Heart left ventricle (tissue), 16 donors: ENCODE measurements at regions of chr17 and their contacts with region 1.

Region 1: GRCh38 chr17:19648475-19649406 is at the start of gene ALDH3A2:
- DNase-seq: peak; percentile 98 to 99 (median 99)
- ATAC-seq: peak; percentile 99
- H3K4me3 ChIP-seq: peak within 1 kb of the TSS; percentile 59 to 97 (median 82)
- H3K27ac ChIP-seq: peak within 1 kb of the TSS; percentile 74 to 99 (median 95)
- H3K4me1 ChIP-seq: peaks cover 0 to 60% (median 46%) of the 10 kb centered on the region in 12 donors
- H3K27me3 ChIP-seq: no peaks in the 10 kb centered on the region
- CTCF ChIP-seq: peak in 4 of 12 donors; percentile 18 to 41 (median 25)
- POLR2A ChIP-seq: peak; percentile 58 to 98
- total RNA-seq, gene ALDH3A2: 57.0 to 129 (median 83.2) TPM

Region 2: DNA sequence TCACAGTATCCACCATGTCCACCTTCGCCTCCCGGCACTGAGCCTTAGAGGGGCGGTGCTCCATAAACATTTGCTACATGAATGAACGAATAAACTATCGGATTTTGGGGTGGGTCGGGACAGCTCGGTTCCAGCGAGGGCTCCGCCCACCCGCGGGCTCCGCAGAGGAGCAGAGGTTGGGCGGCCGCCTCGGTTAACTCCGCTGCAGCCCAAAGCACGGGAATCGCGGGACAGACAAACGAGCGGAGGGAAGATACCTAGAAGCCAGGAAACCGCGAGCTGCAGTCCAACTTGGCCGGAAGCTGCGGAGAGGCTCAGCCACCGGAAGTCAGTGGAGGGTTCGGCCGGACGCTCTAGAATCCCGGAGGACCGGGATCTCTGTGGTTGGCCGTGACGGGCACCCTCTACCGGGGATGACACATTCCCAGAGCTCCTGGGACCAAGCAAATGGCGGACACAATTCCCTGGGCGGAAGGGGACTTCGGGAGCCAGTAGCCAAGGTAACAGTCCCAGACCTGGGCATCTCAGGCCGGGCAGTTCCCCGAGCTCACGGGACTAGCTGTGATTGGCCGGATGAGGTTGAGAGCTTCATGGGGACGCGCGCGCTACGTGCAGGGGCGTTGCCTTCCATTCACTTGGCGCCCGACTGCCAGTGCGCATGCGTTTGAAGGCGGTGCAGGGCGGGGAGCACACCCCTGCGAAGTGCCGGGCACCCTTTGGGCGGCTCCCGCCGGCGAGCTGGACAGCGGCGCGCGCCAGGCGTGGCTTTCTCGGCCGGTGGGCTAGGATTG is 270.9 kb before region 1 on chr17:
- intact Hi-C with region 1: loop called in 1 of 10 experiments (anchors 10 kb)
- DNase-seq: peak in 4 of 5 donors; percentile 99
- ATAC-seq: peak; percentile 92 to 98 (median 96)
- H3K4me3 ChIP-seq: peak overlapping the region; percentile 39 to 97 (median 80)
- H3K27ac ChIP-seq: peak overlapping the region; percentile 71 to 99 (median 94)
- H3K4me1 ChIP-seq: peaks cover 0 to 30% (median 17%) of the 10 kb centered on the region in 12 donors
- H3K27me3 ChIP-seq: no peaks in the 10 kb centered on the region
- CTCF ChIP-seq: peak in 4 of 12 donors; percentile 5 to 33 (median 20)
- POLR2A ChIP-seq: peak in 1 of 2 donors; percentile 44

Region 3: GRCh38 chr17:19513897-19514488 is 134.7 kb before region 1 on chr17:
- intact Hi-C with region 1: loop called in 9 of 10 experiments (anchors 2 to 10 kb)
- DNase-seq: peak; percentile 59 to 73 (median 70)
- ATAC-seq: peak; percentile 56 to 86 (median 74)
- H3K4me3 ChIP-seq: peak overlapping the region in 6 of 12 donors; percentile 4 to 34 (median 22)
- H3K27ac ChIP-seq: peak overlapping the region in 11 of 12 donors; percentile 43 to 79 (median 69)
- H3K4me1 ChIP-seq: peaks cover 0 to 14% (median 8%) of the 10 kb centered on the region in 12 donors
- H3K27me3 ChIP-seq: no peaks in the 10 kb centered on the region
- CTCF ChIP-seq: peak; percentile 82 to 97 (median 90)
- POLR2A ChIP-seq: no peak

Region 4: DNA sequence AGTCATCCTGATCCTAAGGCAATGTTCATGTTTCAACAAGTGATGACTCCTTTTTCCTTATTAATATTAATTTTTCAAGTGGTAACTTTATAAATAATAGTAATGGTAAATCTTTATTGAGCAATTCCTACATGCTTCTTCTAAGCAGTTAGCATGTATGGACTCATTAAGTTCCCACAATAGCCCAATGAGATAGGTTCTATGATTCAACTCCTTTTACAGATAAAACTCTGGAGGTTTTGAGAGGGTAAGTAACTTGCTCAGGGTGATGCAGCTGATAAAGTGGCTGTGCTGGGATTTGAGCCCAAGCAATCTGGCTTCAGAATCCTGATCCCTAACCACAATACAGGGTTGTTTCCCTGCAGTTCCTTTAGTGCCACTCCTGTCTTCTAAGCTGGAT is 89.8 kb before region 1 on chr17:
- intact Hi-C with region 1: no loop called
- DNase-seq: no peak
- ATAC-seq: no peak
- H3K4me3 ChIP-seq: no peak overlapping the region
- H3K27ac ChIP-seq: no peak overlapping the region
- H3K4me1 ChIP-seq: peaks cover 0 to 10% (median 0%) of the 10 kb centered on the region in 12 donors
- H3K27me3 ChIP-seq: no peaks in the 10 kb centered on the region
- CTCF ChIP-seq: no peak
- POLR2A ChIP-seq: no peak

Region 5: DNA sequence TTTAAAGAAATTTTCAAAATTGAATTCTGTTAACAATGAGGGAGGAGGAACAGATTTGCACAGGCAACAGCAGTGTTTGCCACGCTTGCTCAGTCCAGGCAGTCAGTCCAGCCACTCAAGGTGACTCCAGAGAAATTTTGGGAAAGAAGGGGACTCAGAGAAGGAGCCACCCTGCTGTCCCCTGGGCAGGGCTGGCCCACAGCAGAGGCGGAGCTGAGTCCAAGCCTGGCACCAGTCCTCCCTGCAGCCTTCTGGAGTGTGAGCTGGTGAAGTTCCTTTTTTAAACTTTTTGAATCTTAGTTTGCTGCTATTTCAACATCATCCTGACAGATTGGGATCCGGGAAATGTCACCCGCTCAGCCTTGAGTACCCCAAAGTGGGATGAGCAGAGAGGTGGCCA is 82.1 kb after region 1 on chr17:
- intact Hi-C with region 1: no loop called
- DNase-seq: peak in 1 of 5 donors; percentile 31
- ATAC-seq: peak in 1 of 4 donors; percentile 17
- H3K4me3 ChIP-seq: no peak overlapping the region
- H3K27ac ChIP-seq: peak overlapping the region in 1 of 12 donors; percentile 52
- H3K4me1 ChIP-seq: peaks cover 0 to 31% (median 25%) of the 10 kb centered on the region in 12 donors
- H3K27me3 ChIP-seq: no peaks in the 10 kb centered on the region
- CTCF ChIP-seq: no peak
- POLR2A ChIP-seq: no peak

Region 6: GRCh38 chr17:19744922-19745757 is 96.4 kb after region 1 on chr17:
- intact Hi-C with region 1: loop called in 4 of 10 experiments (anchors 10 kb)
- DNase-seq: peak; percentile 85 to 94 (median 91)
- ATAC-seq: peak; percentile 63 to 95 (median 86)
- H3K4me3 ChIP-seq: peak overlapping the region; percentile 28 to 65 (median 60)
- H3K27ac ChIP-seq: peak overlapping the region in 6 of 12 donors; percentile 32 to 64 (median 59)
- H3K4me1 ChIP-seq: peaks cover 0 to 13% (median 5%) of the 10 kb centered on the region in 12 donors
- H3K27me3 ChIP-seq: no peaks in the 10 kb centered on the region
- CTCF ChIP-seq: peak; percentile 85 to 96 (median 92)
- POLR2A ChIP-seq: no peak

Region 7: DNA sequence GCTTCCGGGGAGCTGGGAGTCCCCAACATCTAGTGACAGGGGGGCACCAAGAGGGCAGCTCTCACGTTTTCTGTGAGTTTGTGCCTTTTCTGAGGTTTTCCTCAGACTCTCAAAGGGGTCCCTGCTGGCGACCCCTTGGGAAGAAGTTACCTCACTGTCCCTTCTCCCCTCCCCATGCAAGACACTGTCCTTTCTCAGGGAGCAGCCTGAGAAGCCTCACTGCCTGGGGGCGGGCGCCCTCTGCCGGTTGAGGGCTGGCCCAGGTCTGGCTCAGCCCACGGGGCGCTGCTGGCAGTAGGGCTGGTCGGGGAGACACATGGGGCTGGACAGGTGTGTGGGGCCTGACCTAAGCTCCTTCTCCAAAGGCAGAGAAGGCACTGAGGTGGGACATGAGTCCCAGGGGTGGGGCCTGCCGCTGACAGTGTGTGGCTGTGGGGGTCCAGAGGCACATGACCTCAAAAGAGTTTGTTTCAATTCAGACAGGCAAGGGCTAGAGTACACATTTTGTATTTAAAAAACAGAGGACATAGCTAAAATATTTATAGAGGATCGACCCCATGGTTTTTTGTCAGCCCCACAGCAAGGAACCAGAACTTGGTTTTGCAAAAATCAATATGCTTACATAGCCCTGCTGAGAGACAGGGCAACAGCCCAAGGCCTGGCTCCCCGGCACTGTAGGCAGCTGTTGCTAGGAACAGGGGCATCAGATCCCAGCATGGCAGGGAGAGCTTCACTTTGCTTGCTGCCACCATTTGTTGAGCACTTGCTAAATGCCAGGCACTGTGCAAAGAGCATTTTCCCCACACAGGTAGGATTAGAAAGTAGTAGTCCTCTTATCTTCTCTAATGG is 117.9 kb after region 1 on chr17:
- intact Hi-C with region 1: loop called in 4 of 10 experiments (anchors 5 to 10 kb)
- DNase-seq: peak; percentile 77 to 88 (median 79)
- ATAC-seq: peak; percentile 86 to 92 (median 89)
- H3K4me3 ChIP-seq: no peak overlapping the region
- H3K27ac ChIP-seq: no peak overlapping the region
- H3K4me1 ChIP-seq: peaks cover 0 to 10% (median 0%) of the 10 kb centered on the region in 12 donors
- H3K27me3 ChIP-seq: no peaks in the 10 kb centered on the region
- CTCF ChIP-seq: peak; percentile 86 to 99 (median 96)
- POLR2A ChIP-seq: no peak